ENCODE measurements at regions of chr4 and their contacts with region 1.

Region 1: GRCh38 chr4:150217192-150217591 is 138.9 kb downstream of the DCLK2 start:
- DNase-seq: no peak
- H3K4me3 ChIP-seq: no peak overlapping the region
- H3K27ac ChIP-seq: no peak overlapping the region
- H3K4me1 ChIP-seq: no peaks in the 10 kb centered on the region
- H3K27me3 ChIP-seq: no peaks in the 10 kb centered on the region
- CTCF ChIP-seq: peak in 1 of 3 experiments; percentile 7
- POLR2A ChIP-seq: no peak

Region 2: GRCh38 chr4:150010525-150011126 is 206.6 kb before region 1 on chr4:
- intact Hi-C with region 1: loop called (anchors 10 kb)
- DNase-seq: peak; percentile 67
- H3K4me3 ChIP-seq: no peak overlapping the region
- H3K27ac ChIP-seq: no peak overlapping the region
- H3K4me1 ChIP-seq: no peaks in the 10 kb centered on the region
- H3K27me3 ChIP-seq: no peaks in the 10 kb centered on the region
- CTCF ChIP-seq: peak in 2 of 3 experiments; percentile 45 to 63
- POLR2A ChIP-seq: no peak

Measured in testis (tissue), 5 donors.